K562 (cell line): ENCODE measurements at regions of chr6 and their contacts with region 1.

Region 1: DNA sequence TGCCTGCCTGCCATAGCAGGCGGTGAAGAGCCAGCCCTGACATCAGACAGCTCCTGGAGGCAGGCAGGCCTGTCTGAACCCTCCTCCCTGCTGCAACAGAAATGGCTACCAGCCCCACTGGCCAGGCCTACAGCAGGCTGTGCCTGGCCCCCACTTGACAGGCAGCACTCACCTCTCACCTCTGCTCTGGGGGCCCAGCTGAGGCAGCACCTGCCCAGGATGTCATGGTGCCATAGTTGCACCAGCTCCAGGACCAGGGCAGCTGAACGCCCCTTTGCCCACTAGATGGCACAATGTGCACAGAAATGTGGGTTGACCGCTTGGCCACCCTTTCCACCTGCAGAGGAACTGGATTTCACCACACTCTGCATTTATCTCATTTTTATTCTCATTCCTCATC is 30.6 kb downstream of the MRPL14 start:
- DNase-seq: peak; percentile 56 to 73 (median 64)
- ATAC-seq: peak; percentile 84
- H3K4me3 ChIP-seq: no peak overlapping the region
- H3K27ac ChIP-seq: no peak overlapping the region
- H3K4me1 ChIP-seq: peaks cover 0 to 4% of the 10 kb centered on the region in 2 experiments; a peak in 3 of 5 replicates
- H3K27me3 ChIP-seq: no peaks in the 10 kb centered on the region
- CTCF ChIP-seq: peak; percentile 81 to 82 (median 81)
- EP300 ChIP-seq: no peak
- POLR2A ChIP-seq: no peak
- RAD21 ChIP-seq: peak; percentile 64 to 75

Region 2: GRCh38 chr6:44151348-44152108 is 54.9 kb after region 1 on chr6:
- CTCF ChIA-PET with region 1: interaction called, 15 read pairs
- POLR2A ChIA-PET with region 1: no interaction called
- in situ Hi-C with region 1: loop called (anchors 5 kb)
- intact Hi-C with region 1: loop called (anchors 1 kb)
- DNase-seq: peak; percentile 88 to 95 (median 90)
- ATAC-seq: peak; percentile 96
- H3K4me3 ChIP-seq: no peak overlapping the region
- H3K27ac ChIP-seq: no peak overlapping the region
- H3K4me1 ChIP-seq: peaks cover 0 to 21% of the 10 kb centered on the region in 2 experiments; a peak in 3 of 5 replicates
- H3K27me3 ChIP-seq: no peaks in the 10 kb centered on the region
- CTCF ChIP-seq: peak; percentile 100
- EP300 ChIP-seq: no peak
- POLR2A ChIP-seq: no peak
- RAD21 ChIP-seq: peak; percentile 88 to 97

Region 3: DNA sequence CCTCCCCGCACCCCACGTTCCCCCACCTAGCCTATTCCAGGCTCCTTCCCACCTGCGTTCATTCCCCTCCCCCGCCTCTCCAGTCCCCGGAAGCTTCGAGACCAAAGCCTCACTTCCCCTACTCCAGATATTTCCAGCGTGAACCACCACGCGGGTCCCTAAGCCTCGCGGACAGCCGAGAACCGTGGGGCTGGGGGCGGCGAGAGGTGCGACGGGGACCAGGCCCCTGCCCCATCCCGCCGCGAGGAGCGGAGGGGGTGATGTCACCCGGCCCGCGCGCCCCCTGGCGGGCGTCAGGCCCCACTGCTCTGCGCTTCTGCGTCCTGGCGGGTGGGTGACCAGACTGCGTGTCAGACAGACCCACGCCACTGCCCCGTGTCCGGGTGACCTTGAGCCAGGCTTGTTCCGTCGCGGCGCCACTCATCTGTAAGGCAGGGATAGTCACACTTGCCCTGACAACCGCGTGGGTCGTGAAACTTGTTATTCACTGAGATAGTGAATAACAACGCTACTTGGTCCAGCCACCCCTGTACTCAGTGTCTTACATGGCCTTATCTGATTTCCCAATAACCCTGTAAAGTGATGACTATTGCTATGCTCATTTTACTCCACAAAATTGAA is 141.3 kb after region 1 on chr6:
- CTCF ChIA-PET with region 1: interaction called, 3 read pairs
- POLR2A ChIA-PET with region 1: no interaction called
- in situ Hi-C with region 1: no loop called
- intact Hi-C with region 1: loop called (anchors 1 kb)
- DNase-seq: peak; percentile 90 to 92 (median 90)
- ATAC-seq: peak; percentile 95
- H3K4me3 ChIP-seq: peak overlapping the region; percentile 50
- H3K27ac ChIP-seq: peak overlapping the region; percentile 79
- H3K4me1 ChIP-seq: peaks cover 16 to 26% of the 10 kb centered on the region in 2 experiments; a peak in 4 of 5 replicates
- H3K27me3 ChIP-seq: no peaks in the 10 kb centered on the region
- CTCF ChIP-seq: peak; percentile 93 to 98 (median 95)
- EP300 ChIP-seq: peak; percentile 8; the same call in 1 of the 2 replicates
- POLR2A ChIP-seq: peak; percentile 81
- RAD21 ChIP-seq: peak; percentile 78 to 86